Activated CD4-positive, alpha-beta memory T cell treated with anti-CD3 and anti-CD28 coated beads for 36 hours (primary cell): ENCODE measurements at regions of chr5 and their contacts with region 1.

Region 1: DNA sequence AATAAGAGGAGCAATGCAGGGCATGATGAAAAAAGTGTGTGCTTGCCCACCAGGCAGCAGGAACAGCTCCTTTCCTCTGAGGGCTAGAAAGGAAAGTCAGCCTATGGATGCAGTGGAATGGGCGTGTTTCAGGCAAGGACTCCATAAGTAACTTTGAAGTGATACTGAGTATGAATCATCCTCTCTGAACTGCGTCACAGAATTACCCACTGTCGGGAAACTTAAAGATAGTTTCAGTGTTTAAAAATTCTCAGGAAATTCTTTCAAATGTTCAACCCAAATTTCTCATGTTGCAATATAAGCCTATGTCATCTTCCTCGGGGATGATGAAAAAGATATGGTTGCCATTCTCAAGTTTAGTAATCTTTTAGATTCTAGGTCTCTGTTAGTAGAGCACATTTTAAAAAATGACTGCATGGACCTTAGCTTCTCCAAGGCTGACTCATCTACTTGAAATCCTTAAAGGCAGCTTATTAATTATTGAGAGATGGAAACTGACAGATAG is 27.7 kb downstream of the PTCD2 start:
- DNase-seq: peak; percentile 35
- H3K4me3 Mint-ChIP-seq: no peak overlapping the region
- H3K27ac Mint-ChIP-seq: peak overlapping the region; percentile 70
- H3K4me1 Mint-ChIP-seq: peaks cover 32% of the 10 kb centered on the region
- H3K27me3 Mint-ChIP-seq: no peaks in the 10 kb centered on the region

Region 2: GRCh38 chr5:72093217-72093616 is 254.6 kb before region 1 on chr5:
- CTCF ChIA-PET with region 1: no interaction called
- POLR2A ChIA-PET with region 1: no interaction called
- intact Hi-C with region 1: loop called (anchors 5 kb)
- DNase-seq: no peak
- H3K4me3 Mint-ChIP-seq: no peak overlapping the region
- H3K27ac Mint-ChIP-seq: no peak overlapping the region
- H3K4me1 Mint-ChIP-seq: peaks cover 11% of the 10 kb centered on the region
- H3K27me3 Mint-ChIP-seq: peaks cover 29% of the 10 kb centered on the region

Region 3: DNA sequence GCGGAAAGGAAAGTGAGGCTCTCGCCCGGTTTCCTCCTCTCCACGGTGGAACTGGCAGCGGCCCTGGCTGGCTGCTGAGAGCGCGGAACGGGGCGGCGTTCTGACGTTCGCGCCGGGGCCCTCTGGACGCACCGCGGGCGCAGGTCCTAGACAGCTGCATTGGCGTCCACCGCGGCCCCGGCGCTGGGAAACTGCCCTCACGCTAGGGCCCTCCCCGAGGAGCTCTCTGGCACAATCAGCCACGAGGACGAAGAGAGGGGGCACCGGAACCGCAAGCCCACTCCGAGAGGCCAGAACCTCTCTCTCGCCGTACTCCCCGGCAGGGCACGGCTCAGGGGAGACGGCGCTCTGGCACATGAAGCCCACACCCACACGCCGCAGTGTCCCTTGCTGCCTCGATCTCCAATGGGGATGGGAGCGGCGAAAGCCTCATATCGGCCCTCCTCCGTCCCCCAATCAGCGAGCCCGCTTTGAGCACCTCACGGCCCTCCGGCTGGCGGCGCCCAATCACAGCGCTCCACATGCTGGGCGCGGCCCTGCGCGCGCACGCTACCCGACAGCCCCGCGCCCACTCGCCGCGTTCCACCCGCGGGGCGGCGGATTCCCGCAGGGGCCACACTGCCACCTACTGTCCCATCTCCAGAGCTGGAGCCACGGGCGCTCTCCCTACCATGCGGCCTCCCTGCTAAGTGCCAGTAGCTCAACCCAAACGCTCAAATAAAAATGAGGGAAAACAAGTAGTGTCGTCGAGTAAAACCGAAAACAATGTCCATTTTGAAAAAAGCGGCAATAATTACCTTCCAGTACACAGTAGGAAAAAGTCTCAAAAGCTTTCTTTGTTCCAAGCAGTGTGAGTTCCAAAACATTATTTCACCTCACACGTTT is 39.6 kb before region 1 on chr5:
- CTCF ChIA-PET with region 1: interaction called, 3 read pairs
- POLR2A ChIA-PET with region 1: no interaction called
- intact Hi-C with region 1: loop called (anchors 1 kb)
- DNase-seq: peak; percentile 97
- H3K4me3 Mint-ChIP-seq: peak overlapping the region; percentile 89
- H3K27ac Mint-ChIP-seq: peak overlapping the region; percentile 87
- H3K4me1 Mint-ChIP-seq: peaks cover 23% of the 10 kb centered on the region
- H3K27me3 Mint-ChIP-seq: no peaks in the 10 kb centered on the region

Region 4: DNA sequence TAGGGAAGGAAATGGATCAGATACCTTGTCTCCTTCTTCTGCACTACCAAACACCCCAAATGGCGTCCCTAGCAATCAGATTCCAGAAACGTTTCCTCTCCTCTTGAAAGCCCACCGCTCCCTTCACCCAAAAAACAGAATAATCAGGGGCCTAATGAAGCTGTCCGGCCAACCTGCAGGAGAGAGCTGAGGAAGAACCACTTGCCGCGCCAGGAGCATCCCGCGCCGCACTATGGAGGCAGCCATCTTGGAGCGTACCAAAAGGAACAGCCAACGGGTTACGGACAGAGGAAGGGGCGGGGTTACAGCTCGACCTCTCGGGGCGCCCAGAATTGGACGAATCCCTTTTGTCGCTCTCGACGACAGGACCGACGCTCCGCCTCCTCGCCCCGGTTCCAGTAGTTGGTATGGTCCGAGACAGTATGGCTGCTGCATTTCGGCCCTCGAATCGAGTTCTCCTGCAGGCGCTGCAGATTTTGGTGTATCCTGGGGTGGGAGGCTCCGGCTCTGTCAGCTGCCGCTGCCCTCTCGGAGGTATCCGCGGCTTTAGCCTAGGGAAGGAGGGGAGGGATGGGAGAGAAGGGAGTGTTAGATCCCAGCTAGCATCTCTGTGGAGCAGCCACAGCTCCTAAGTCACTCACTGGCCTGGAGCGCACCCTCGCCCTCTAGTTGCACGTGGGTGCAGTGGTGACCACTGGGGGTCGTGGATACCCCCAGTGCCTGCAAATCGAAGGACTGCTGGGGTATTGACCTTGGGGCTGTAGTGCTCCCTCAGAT is 27.7 kb before region 1 on chr5 and contains the starts of genes MRPS27 and PTCD2:
- CTCF ChIA-PET with region 1: no interaction called
- POLR2A ChIA-PET with region 1: interaction called, 10 read pairs
- intact Hi-C with region 1: loop called (anchors 1 kb)
- DNase-seq: peak; percentile 97
- H3K4me3 Mint-ChIP-seq: peak within 1 kb of the TSS; percentile 91
- H3K27ac Mint-ChIP-seq: peak within 1 kb of the TSS; percentile 85
- H3K4me1 Mint-ChIP-seq: peaks cover 32% of the 10 kb centered on the region
- H3K27me3 Mint-ChIP-seq: no peaks in the 10 kb centered on the region
- total RNA-seq, gene MRPS27: 85.9 to 91.4 TPM
- total RNA-seq, gene PTCD2: 10.8 to 12.1 TPM

Region 5: DNA sequence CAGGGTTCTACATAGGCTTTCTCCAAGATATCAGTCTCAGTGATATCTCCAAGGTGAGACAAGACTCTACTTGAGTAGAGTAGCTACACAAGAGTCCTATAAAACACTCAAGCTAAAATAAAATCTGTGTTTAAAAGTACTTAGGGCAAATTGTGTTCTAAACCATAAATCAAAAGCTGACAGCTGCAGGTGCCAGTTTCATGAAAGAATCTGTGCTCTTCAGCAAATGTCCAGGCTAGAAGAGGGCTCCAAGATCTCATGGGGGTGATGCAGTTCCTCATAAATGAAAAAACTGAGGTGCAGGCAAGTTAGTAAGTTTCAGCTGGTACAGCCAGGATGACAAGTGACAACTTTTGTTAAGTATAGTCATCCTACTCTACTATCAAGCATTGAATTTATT is 325.8 kb after region 1 on chr5:
- CTCF ChIA-PET with region 1: no interaction called
- POLR2A ChIA-PET with region 1: no interaction called
- intact Hi-C with region 1: no loop called
- DNase-seq: no peak
- H3K4me3 Mint-ChIP-seq: no peak overlapping the region
- H3K27ac Mint-ChIP-seq: no peak overlapping the region
- H3K4me1 Mint-ChIP-seq: no peaks in the 10 kb centered on the region
- H3K27me3 Mint-ChIP-seq: peaks cover 3% of the 10 kb centered on the region